Psoas muscle (tissue), 8 donors: ENCODE measurements at regions of chr14 and their contacts with region 1.

Region 1: GRCh38 chr14:91911474-91912032 is 35.9 kb downstream of the FBLN5 start:
- DNase-seq: no peak
- ATAC-seq: peak in 2 of 4 donors; percentile 39 to 44
- H3K4me3 ChIP-seq: no peak overlapping the region
- H3K27ac ChIP-seq: no peak overlapping the region
- H3K4me1 ChIP-seq: no peaks in the 10 kb centered on the region
- H3K27me3 ChIP-seq: peaks cover 0 to 2% (median 0%) of the 10 kb centered on the region in 3 donors
- CTCF ChIP-seq: peak; percentile 14

Region 2: GRCh38 chr14:91649930-91650329 is 261.6 kb before region 1 on chr14:
- intact Hi-C with region 1: loop called in 1 of 2 experiments (anchors 2 kb)
- DNase-seq: no peak
- ATAC-seq: no peak
- H3K4me3 ChIP-seq: no peak overlapping the region
- H3K27ac ChIP-seq: no peak overlapping the region
- H3K4me1 ChIP-seq: no peaks in the 10 kb centered on the region
- H3K27me3 ChIP-seq: no peaks in the 10 kb centered on the region
- CTCF ChIP-seq: peak; percentile 41

Region 3: DNA sequence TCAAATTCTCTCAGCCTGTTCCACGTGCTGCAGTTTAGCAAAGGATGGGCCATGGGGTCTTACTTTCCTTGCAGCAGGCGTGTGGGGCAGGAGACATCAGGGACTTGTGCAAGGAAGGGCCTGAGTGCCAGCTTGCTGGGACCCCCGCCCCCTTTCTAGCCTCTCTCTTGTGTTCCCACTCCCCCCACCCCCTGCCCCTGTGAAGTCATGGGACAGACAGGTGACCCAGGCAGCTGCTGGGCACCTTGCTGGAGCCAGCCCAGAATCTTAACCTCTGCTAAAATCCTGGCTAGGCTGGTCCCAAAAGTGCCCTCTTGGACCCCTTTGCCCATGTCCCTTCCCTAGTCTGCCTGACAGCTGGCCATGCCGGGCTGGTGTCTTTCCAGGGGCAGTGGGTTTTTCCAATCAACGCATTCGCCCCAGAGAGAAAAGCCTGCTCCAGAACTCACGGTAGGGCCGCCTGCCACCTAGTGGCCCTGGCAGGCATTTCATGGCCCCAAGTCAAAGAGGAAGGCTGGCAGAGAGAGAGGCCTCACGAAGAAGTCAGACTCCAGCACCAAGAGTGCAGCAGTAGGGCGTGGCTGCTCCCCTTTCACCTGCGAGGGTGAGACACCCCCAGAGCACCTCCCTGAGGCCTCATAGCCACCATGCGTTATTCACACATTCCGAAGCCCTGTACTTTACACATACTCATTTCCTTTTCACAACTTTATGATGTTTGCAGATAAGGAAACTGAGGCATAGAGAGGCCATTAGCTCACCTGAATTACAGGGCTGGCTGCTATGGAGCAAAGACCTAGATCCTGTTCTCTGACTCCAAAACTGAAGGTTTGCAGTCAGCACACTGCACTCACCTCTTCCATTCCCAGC is 769.5 kb after region 1 on chr14:
- intact Hi-C with region 1: no loop called
- DNase-seq: peak; percentile 67 to 77
- ATAC-seq: peak in 3 of 4 donors; percentile 57 to 67 (median 59)
- H3K4me3 ChIP-seq: no peak overlapping the region
- H3K27ac ChIP-seq: no peak overlapping the region
- H3K4me1 ChIP-seq: no peaks in the 10 kb centered on the region
- H3K27me3 ChIP-seq: no peaks in the 10 kb centered on the region
- CTCF ChIP-seq: peak; percentile 70